ENCODE measurements at regions of chr7 and their contacts with region 1.

Region 1: DNA sequence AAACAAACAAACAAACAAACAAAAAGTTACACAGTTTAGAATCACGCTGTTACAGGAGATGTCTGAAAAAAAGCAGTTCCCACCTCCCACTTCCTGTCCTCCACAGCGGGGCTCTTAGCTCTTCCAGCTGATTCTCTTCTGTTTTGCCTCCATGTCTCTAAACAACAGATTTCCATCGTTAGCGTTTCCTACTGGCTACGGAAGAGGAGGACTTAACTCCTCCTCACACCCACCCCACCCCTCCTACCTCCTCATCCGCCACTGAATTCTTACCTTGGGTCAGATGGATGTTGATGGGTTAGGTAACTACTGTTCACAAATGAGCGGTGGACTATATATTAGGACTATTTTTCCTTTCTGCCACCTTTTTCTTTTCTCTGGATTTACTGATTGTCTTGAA is 36.8 kb upstream of the NUB1 start:
- DNase-seq: no peak
- ATAC-seq: peak in 1 of 4 donors; percentile 9
- H3K4me3 ChIP-seq: no peak overlapping the region
- H3K27ac ChIP-seq: no peak overlapping the region
- H3K4me1 ChIP-seq: peaks cover 0 to 8% (median 0%) of the 10 kb centered on the region in 4 donors
- H3K27me3 ChIP-seq: peaks cover 0 to 11% of the 10 kb centered on the region in 2 donors
- CTCF ChIP-seq: no peak
- POLR2A ChIP-seq: no peak

Region 2: GRCh38 chr7:150852371-150852920 is 452.4 kb before region 1 on chr7 and contains the start of gene AOC1:
- intact Hi-C with region 1: no loop called
- DNase-seq: no peak
- ATAC-seq: no peak
- H3K4me3 ChIP-seq: no peak within 1 kb of the TSS
- H3K27ac ChIP-seq: no peak within 1 kb of the TSS
- H3K4me1 ChIP-seq: no peaks in the 10 kb centered on the region
- H3K27me3 ChIP-seq: no peaks in the 10 kb centered on the region
- CTCF ChIP-seq: no peak
- POLR2A ChIP-seq: no peak
- total RNA-seq, gene AOC1: 2.2 to 17.5 (median 9.4) TPM in 3 of 6 experiments, not detected in the others

Region 3: DNA sequence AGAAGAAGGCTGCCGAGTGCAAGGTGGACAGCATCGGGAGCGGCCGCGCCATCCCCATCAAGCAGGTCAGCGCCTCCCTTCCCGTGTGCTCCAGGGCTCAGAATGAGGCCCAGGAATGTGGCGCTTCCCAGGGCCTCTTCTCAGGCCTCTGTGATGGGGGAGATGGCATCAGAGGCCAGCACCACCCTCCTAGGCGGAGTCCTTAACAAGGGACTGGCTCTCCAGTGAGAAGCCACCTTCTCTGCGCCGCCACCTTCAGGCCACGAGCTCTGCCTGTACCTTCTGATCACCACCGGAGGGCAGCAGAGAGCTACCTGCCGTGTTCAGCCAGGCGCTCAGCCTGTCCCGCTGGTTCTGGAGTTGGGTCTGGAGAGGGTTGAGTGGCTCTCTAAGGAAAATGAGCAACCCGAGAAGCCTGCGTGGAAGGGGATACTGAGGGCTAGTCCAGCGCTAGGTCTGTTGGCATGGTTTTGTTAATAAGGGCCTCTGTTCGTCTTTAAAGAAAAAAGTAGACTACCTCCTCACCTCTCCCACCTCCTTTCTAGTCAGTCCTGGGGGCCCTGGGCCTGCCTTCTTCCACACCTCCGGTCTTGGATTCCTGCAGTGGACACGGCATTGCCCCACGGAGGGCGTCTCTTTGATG is 180.9 kb before region 1 on chr7:
- intact Hi-C with region 1: no loop called
- DNase-seq: peak; percentile 81 to 85 (median 82)
- ATAC-seq: peak; percentile 88 to 97 (median 94)
- H3K4me3 ChIP-seq: no peak overlapping the region
- H3K27ac ChIP-seq: no peak overlapping the region
- H3K4me1 ChIP-seq: no peaks in the 10 kb centered on the region
- H3K27me3 ChIP-seq: no peaks in the 10 kb centered on the region
- CTCF ChIP-seq: peak; percentile 88 to 99 (median 98)
- POLR2A ChIP-seq: no peak

Region 4: DNA sequence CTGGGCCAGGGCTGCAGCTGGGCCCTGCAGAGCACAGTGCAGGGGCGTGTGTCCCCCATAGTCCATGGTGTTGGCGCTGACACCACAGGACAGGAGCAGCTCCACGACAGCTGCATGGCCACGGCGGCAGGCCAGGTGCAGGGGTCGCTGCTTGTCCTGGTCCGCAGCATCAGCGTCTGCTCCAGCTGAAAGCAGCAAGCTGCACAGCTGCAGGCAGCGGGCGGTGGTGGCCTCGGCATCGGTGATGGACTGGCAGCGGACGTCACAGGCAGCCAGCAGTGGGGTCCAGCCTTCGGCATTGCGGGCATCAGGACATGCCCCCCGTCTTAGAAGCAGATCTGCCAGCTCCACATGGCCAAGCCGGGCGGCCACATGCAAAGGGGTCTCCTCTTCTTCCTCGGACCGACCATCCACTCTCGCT is 123.8 kb before region 1 on chr7:
- intact Hi-C with region 1: no loop called
- DNase-seq: peak in 1 of 3 donors; percentile 39
- ATAC-seq: no peak
- H3K4me3 ChIP-seq: no peak overlapping the region
- H3K27ac ChIP-seq: no peak overlapping the region
- H3K4me1 ChIP-seq: no peaks in the 10 kb centered on the region
- H3K27me3 ChIP-seq: no peaks in the 10 kb centered on the region
- CTCF ChIP-seq: no peak
- POLR2A ChIP-seq: no peak

Region 5: DNA sequence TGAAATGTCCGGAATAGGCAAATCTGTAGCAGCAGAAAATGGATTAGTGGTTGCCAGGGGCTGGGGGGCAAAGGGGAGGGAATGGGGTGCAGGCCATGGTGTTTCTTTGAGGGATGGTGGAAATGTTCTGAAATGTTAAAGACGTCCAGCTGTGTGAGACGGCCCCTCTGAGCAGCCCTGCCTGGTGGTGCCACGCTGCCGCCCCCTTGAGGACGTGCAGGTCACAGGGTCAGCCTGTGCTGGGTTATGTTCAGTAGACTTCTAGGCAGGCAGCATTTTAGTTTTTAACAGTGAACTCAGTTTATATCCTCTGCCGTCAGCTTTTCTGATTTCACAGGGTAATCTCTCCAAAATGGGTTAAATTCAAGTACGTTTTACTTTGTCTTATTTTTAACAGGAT is 46.2 kb after region 1 on chr7:
- intact Hi-C with region 1: loop called in 1 of 2 experiments (anchors 5 kb)
- DNase-seq: no peak
- ATAC-seq: peak in 1 of 4 donors; percentile 21
- H3K4me3 ChIP-seq: no peak overlapping the region
- H3K27ac ChIP-seq: no peak overlapping the region
- H3K4me1 ChIP-seq: peaks cover 0 to 11% (median 5%) of the 10 kb centered on the region in 4 donors
- H3K27me3 ChIP-seq: no peaks in the 10 kb centered on the region
- CTCF ChIP-seq: peak in 2 of 4 donors; percentile 15 to 16
- POLR2A ChIP-seq: no peak

Region 6: DNA sequence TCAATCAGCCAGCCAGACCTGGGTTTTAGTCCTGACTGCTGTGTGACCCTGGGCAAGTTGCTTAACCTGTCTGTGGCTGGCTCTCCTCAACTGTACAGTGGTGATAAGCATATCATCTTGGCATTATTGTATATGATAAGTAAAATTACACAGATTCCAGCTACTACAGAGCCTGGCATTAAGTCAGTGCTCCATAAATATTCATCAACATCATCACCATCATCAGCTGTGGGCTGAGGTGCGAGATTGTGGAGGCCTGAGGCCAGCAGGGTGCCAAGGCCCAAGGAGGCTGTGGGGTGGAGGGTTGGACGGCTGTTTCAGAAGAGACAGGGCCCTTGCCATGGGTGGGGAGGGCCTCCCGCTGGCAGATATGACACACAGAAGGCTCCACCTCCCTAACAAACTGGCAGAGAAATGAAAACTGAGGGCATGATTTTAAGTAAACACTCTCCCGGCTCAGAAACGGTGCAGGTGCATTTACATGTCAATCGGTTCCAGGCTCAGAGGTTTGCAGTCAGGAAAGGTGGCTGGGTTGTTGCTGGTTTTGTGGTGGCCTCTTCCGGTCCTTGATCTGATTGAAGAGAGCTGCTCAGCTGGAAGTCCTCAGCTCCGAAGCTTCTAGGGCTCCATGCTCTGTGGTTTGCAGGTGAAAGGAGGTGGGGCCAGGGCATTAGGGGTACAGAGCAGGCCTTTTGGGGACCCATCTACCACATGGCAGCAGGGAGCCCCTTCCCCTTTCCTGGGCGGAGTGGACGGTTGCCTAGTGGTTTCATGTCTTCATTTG is 124.9 kb after region 1 on chr7:
- intact Hi-C with region 1: loop called in 1 of 2 experiments (anchors 10 kb)
- DNase-seq: no peak
- ATAC-seq: peak in 3 of 4 donors; percentile 12 to 60 (median 30)
- H3K4me3 ChIP-seq: no peak overlapping the region
- H3K27ac ChIP-seq: no peak overlapping the region
- H3K4me1 ChIP-seq: no peaks in the 10 kb centered on the region
- H3K27me3 ChIP-seq: no peaks in the 10 kb centered on the region
- CTCF ChIP-seq: no peak
- POLR2A ChIP-seq: no peak

Region 7: GRCh38 chr7:151439855-151440798 is 135.3 kb after region 1 on chr7 and contains the start of gene CRYGN:
- intact Hi-C with region 1: no loop called
- DNase-seq: no peak
- ATAC-seq: peak in 1 of 4 donors; percentile 12
- H3K4me3 ChIP-seq: no peak within 1 kb of the TSS
- H3K27ac ChIP-seq: no peak within 1 kb of the TSS
- H3K4me1 ChIP-seq: peaks cover 0 to 4% (median 0%) of the 10 kb centered on the region in 4 donors
- H3K27me3 ChIP-seq: no peaks in the 10 kb centered on the region
- CTCF ChIP-seq: no peak
- POLR2A ChIP-seq: no peak
- total RNA-seq, gene CRYGN: not detected

Region 8: GRCh38 chr7:151459726-151460473 is 155.0 kb after region 1 on chr7:
- intact Hi-C with region 1: loop called in 1 of 2 experiments (anchors 10 kb)
- DNase-seq: peak; percentile 58 to 69 (median 67)
- ATAC-seq: peak; percentile 79 to 89 (median 87)
- H3K4me3 ChIP-seq: no peak overlapping the region
- H3K27ac ChIP-seq: peak overlapping the region; percentile 28 to 67 (median 45)
- H3K4me1 ChIP-seq: peaks cover 0 to 13% (median 3%) of the 10 kb centered on the region in 4 donors
- H3K27me3 ChIP-seq: no peaks in the 10 kb centered on the region
- CTCF ChIP-seq: peak in 1 of 4 donors; percentile 22
- POLR2A ChIP-seq: peak; percentile 42